Right ventricle myocardium superior (tissue), 1 donor: ENCODE measurements at regions of chr2 and their contacts with region 1.

Region 1: DNA sequence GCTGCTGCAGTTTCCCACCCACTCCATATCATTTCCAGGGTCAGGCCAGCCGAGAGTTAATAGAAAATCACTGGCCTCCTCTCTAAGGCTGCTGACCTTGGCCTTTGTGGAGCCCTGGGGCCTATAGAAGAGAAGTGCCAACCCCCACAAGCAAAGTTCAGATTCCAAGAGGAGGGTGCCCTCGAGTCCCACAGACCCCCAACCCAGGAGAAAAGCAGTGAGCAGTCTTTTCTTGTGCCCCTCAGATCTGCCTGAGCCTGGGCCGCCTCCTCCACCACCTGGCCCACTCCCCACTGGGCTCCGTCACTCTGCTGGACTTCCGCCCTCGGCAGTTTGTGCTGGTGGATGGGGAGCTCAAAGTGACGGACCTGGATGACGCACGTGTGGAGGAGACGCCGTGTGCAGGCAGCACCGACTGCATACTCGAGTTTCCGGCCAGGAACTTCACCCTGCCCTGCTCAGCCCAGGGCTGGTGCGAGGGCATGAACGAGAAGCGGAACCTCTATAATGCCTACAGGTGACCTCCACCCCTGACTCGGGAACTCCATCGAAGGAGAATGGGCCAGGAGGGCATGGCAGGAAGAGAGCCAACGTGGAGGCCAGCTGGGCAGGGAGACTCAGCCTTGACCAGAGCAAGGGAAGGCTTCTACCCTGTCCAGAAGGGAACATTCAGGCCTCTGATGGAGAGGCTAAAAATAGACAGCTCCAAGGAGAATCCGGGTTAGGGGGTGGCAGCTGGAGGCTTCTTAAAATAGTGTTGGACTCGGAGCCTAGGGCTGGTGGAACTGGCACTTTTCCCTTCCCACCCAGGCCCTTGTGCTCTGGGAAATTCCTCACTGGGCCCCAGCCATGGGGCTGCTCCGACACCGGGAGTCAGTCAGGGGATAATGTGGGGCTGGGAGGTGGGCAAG is 6.2 kb downstream of the PKDCC start:
- DNase-seq: peak; percentile 73
- ATAC-seq: peak; percentile 76

Region 2: DNA sequence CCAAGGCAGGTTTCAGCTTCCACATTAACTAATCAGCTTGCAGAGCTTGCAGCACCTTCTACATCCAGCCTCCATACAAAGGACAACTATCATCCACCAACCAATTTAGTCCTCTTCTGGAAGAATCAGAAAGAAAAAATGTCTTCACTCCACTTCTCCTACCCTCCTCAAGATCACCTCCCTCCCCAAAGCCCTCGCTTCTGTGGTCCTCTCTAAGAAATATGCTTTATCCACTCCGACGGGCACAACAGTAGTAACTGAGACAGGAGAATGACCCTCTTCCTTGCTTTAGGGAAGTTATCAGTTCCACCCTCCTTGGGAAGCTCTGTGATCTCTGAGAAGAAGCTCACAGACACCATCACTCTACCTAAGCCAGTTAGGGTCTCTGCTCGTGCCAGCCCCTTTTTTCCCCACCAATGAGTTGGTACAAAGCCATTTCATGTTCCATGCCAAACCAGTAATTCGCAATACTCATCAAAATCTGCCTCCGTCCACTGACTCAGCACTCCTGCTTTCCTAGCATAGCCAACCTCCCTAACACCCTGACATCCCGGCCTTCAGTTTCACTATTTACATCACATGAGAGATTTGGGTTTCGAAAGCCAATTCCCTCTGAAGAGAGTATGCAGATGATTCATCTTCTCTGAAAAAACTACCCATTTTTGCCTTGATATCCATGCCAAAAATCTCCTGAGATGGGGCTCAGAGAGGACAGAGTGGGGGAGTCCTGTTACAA is 120.3 kb before region 1 on chr2:
- intact Hi-C with region 1: loop called (anchors 10 kb)
- DNase-seq: no peak
- ATAC-seq: peak; percentile 45

Region 3: GRCh38 chr2:42171396-42171980 is 117.4 kb after region 1 on chr2:
- intact Hi-C with region 1: no loop called
- DNase-seq: no peak
- ATAC-seq: no peak